Transverse colon (tissue), 4 donors: ENCODE measurements at regions of chr11 and their contacts with region 1.

Region 1: DNA sequence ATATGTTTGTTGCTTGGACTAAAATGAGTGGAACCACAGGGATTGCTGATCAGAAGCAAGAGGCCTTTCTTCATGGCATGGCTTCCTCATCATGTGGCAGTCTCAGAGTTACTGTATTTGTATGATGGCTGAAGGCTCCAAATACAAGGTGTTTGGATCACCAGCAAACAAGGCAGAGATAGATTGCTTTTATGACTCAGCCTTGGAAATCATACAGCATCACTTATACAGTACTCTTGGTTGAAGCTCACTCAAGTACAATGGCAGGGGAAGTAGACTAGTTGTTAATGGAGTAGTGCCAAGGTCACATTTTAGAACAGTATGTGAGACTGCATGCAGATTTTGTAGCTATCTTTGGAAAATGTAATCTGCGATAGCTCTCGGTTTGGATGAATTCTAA is 16.6 kb downstream of the CAPRIN1 start:
- DNase-seq: no peak
- H3K4me3 ChIP-seq: no peak overlapping the region
- H3K27ac ChIP-seq: no peak overlapping the region
- H3K4me1 ChIP-seq: peaks cover 10 to 62% (median 32%) of the 10 kb centered on the region in 4 donors
- H3K27me3 ChIP-seq: no peaks in the 10 kb centered on the region
- CTCF ChIP-seq: no peak
- EP300 ChIP-seq: no peak
- POLR2A ChIP-seq: no peak

Region 2: GRCh38 chr11:33869481-33870422 is 198.4 kb before region 1 on chr11:
- in situ Hi-C with region 1: no loop called
- intact Hi-C with region 1: loop called (anchors 5 kb)
- DNase-seq: peak; percentile 24
- H3K4me3 ChIP-seq: peak overlapping the region; percentile 25 to 61 (median 54)
- H3K27ac ChIP-seq: peak overlapping the region; percentile 51 to 72 (median 64)
- H3K4me1 ChIP-seq: peaks cover 0 to 16% (median 14%) of the 10 kb centered on the region in 4 donors
- H3K27me3 ChIP-seq: peaks cover 78% of the 10 kb centered on the region
- CTCF ChIP-seq: no peak
- EP300 ChIP-seq: no peak
- POLR2A ChIP-seq: no peak